K562 (cell line): ENCODE measurements at regions of chr7 and their contacts with region 1.

Region 1: GRCh38 chr7:103866919-103867318 is 122.5 kb downstream of the RELN start:
- DNase-seq: no peak
- ATAC-seq: no peak
- H3K4me3 ChIP-seq: no peak overlapping the region
- H3K27ac ChIP-seq: no peak overlapping the region
- H3K4me1 ChIP-seq: no peaks in the 10 kb centered on the region
- H3K27me3 ChIP-seq: no peaks in the 10 kb centered on the region
- CTCF ChIP-seq: no peak
- EP300 ChIP-seq: no peak
- POLR2A ChIP-seq: no peak
- RAD21 ChIP-seq: no peak

Region 2: GRCh38 chr7:103821092-103821491 is 45.8 kb before region 1 on chr7:
- CTCF ChIA-PET with region 1: no interaction called
- POLR2A ChIA-PET with region 1: no interaction called
- in situ Hi-C with region 1: no loop called
- intact Hi-C with region 1: no loop called
- DNase-seq: no peak
- ATAC-seq: no peak
- H3K4me3 ChIP-seq: no peak overlapping the region
- H3K27ac ChIP-seq: no peak overlapping the region
- H3K4me1 ChIP-seq: no peaks in the 10 kb centered on the region
- H3K27me3 ChIP-seq: no peaks in the 10 kb centered on the region
- CTCF ChIP-seq: no peak
- EP300 ChIP-seq: no peak
- POLR2A ChIP-seq: no peak
- RAD21 ChIP-seq: no peak

Region 3: GRCh38 chr7:103877565-103877964 is 10.6 kb after region 1 on chr7:
- CTCF ChIA-PET with region 1: no interaction called
- POLR2A ChIA-PET with region 1: interaction called, 10 read pairs
- in situ Hi-C with region 1: no loop called
- intact Hi-C with region 1: no loop called
- DNase-seq: no peak
- ATAC-seq: peak; percentile 75
- H3K4me3 ChIP-seq: no peak overlapping the region
- H3K27ac ChIP-seq: no peak overlapping the region
- H3K4me1 ChIP-seq: no peaks in the 10 kb centered on the region
- H3K27me3 ChIP-seq: no peaks in the 10 kb centered on the region
- CTCF ChIP-seq: peak in 1 of 3 experiments; percentile 31; a peak in 1 of 6 replicates
- EP300 ChIP-seq: no peak
- POLR2A ChIP-seq: no peak
- RAD21 ChIP-seq: no peak

Region 4: DNA sequence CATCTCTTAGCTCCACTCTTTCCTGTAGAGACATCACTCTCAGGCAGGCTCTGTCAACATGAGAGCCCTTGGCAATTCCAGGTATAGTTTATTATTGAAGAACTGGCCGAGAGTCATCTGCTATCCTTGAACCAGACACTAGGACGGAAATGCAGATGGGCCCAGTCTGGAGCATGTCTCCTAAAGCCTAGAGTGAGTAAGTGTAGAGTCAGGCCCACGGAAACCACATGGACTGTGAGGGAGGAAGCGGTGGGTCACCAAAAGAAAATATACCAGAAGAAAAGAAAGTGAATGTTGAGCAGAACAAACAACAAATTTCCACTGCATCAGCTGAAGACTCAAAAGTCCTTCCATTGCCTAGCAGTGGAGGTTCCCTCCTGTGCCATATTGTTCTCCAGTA is 138.3 kb after region 1 on chr7:
- CTCF ChIA-PET with region 1: no interaction called
- POLR2A ChIA-PET with region 1: no interaction called
- in situ Hi-C with region 1: no loop called
- intact Hi-C with region 1: no loop called
- DNase-seq: peak in 1 of 4 experiments; percentile 25
- ATAC-seq: peak; percentile 64
- H3K4me3 ChIP-seq: no peak overlapping the region
- H3K27ac ChIP-seq: no peak overlapping the region; the same call in 2 of the 3 replicates
- H3K4me1 ChIP-seq: peaks cover 0 to 6% of the 10 kb centered on the region in 2 experiments; a peak in 4 of 5 replicates
- H3K27me3 ChIP-seq: no peaks in the 10 kb centered on the region
- CTCF ChIP-seq: no peak
- EP300 ChIP-seq: no peak
- POLR2A ChIP-seq: no peak
- RAD21 ChIP-seq: no peak

Region 5: GRCh38 chr7:104328296-104328969 is 461.5 kb after region 1 on chr7 and contains the start of gene LHFPL3:
- CTCF ChIA-PET with region 1: no interaction called
- POLR2A ChIA-PET with region 1: no interaction called
- in situ Hi-C with region 1: no loop called
- intact Hi-C with region 1: no loop called
- DNase-seq: no peak
- ATAC-seq: no peak; the same call in 2 of the 3 replicates
- H3K4me3 ChIP-seq: no peak within 1 kb of the TSS
- H3K27ac ChIP-seq: no peak within 1 kb of the TSS
- H3K4me1 ChIP-seq: peaks cover 0 to 14% of the 10 kb centered on the region in 2 experiments; a peak in 1 of 5 replicates
- H3K27me3 ChIP-seq: peaks cover 25 to 27% of the 10 kb centered on the region in 2 experiments
- CTCF ChIP-seq: no peak
- EP300 ChIP-seq: no peak
- POLR2A ChIP-seq: no peak
- RAD21 ChIP-seq: no peak
- polyA plus RNA-seq, gene LHFPL3: 0.21 to 0.52 TPM